SK-N-SH (cell line): ENCODE measurements at regions of chr7 and their contacts with region 1.

Region 1: DNA sequence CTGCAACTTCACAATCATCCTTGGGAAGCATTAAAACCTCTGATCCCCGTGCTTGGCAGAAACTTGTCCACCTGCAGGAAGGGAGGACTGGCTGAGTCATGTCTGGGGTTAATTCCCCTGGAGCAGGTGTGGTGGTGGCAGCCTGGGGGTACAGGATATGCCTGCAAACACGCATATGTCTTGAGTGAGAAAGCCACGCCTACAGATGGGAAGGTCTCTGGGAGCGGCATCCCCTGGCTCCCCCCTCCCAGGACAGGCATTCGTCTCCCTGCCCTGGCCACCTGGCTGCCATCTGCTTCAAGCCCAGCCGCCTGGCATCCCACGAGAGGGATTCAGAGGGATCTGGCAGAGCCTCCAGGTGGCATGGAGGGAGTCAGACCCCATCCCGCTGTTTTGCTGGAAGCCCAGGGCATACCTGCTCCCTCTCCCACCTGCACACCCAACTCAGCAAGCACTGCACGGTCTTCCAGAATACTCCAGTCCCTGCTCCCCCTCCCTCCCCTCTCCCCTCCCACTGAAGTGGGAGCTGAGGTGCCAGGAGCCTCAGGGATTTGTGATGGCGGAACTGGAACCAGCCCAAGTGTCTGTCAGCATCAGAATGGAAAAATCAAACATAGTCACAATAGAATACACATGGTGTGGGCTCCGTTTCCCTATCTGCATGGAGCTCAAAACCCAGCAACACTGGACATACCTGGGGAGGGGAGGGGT is 61.0 kb downstream of the CAMK2B start:
- DNase-seq: peak; percentile 89
- H3K4me3 ChIP-seq: no peak overlapping the region; a peak in 1 of 4 replicates
- H3K27ac ChIP-seq: peak overlapping the region in 1 of 2 experiments; percentile 68; a peak in 2 of 4 replicates
- H3K4me1 ChIP-seq: peaks cover 4 to 52% of the 10 kb centered on the region in 2 experiments
- H3K27me3 ChIP-seq: peaks cover 48% of the 10 kb centered on the region
- CTCF ChIP-seq: no peak
- EP300 ChIP-seq: no peak
- RAD21 ChIP-seq: no peak; the same call in 1 of the 2 replicates

Region 2: DNA sequence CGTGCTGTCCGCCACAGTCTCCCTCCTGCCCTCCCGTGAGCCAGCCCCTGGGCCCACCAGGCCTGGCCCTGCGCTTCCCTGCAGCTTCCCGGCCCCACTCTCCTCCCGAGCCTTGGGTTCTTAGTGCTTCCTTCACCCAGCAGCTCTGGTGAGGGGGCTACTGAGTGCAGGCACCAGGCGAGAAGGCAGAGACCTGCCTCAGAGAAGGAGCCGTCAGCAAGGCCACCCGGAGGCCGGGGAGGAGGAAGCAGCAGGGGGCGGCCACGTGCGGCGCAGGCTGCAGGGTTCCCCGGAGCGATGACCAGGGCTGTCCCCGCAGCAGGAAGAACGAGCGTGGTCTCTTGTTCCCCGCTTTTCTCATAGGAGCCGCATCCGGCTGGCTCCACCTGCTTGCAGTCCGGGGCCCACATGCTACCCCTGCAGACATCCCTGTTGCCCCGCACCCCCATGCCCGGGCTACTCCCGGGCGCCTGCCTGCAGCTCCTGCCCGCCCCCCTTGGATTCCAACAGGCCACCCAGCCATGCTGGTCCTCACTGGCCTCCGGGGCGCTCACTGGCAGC is 43.1 kb before region 1 on chr7:
- CTCF ChIA-PET with region 1: no interaction called
- POLR2A ChIA-PET with region 1: no interaction called
- DNase-seq: peak; percentile 79
- H3K4me3 ChIP-seq: no peak overlapping the region
- H3K27ac ChIP-seq: no peak overlapping the region; a peak in 1 of 4 replicates
- H3K4me1 ChIP-seq: peaks cover 0 to 51% of the 10 kb centered on the region in 2 experiments; a peak in 1 of 4 replicates
- H3K27me3 ChIP-seq: no peaks in the 10 kb centered on the region
- CTCF ChIP-seq: no peak
- EP300 ChIP-seq: no peak
- RAD21 ChIP-seq: no peak

Region 3: GRCh38 chr7:44291066-44291732 is 26.8 kb after region 1 on chr7:
- CTCF ChIA-PET with region 1: interaction called, 16 read pairs
- POLR2A ChIA-PET with region 1: no interaction called
- DNase-seq: peak; percentile 39
- H3K4me3 ChIP-seq: no peak overlapping the region
- H3K27ac ChIP-seq: peak overlapping the region in 1 of 2 experiments; percentile 28; a peak in 1 of 4 replicates
- H3K4me1 ChIP-seq: peaks cover 0 to 54% of the 10 kb centered on the region in 2 experiments; a peak in 2 of 4 replicates
- H3K27me3 ChIP-seq: peaks cover 45% of the 10 kb centered on the region
- CTCF ChIP-seq: no peak
- EP300 ChIP-seq: no peak
- RAD21 ChIP-seq: no peak